ENCODE measurements at regions of chr15 and their contacts with region 1.

Region 1: GRCh38 chr15:36529296-36530011 is 50.0 kb upstream of the CDIN1 start:
- DNase-seq: no peak
- H3K4me3 ChIP-seq: no peak overlapping the region
- H3K27ac ChIP-seq: no peak overlapping the region
- H3K4me1 ChIP-seq: no peaks in the 10 kb centered on the region
- H3K27me3 ChIP-seq: no peaks in the 10 kb centered on the region
- CTCF ChIP-seq: no peak
- POLR2A ChIP-seq: no peak

Region 2: DNA sequence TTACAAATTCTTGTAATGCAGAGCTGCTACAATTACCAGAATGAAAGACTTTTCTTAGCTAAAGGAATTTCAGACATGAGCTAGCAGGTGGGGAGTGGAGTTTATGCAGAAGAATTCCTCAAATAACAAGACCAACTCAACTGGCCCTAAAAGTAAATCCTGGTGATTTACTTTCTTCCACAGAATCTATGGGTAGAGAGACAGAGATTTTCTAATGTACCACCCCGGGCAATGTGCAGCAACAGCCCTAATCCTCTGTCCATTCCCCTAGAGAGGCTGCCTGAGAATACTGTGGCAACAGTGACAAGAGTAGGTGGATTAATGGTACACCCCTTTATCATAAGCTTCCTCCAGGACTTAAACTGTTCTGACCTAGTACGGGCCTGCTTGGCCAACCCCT is 1615.1 kb before region 1 on chr15:
- intact Hi-C with region 1: loop called (anchors 10 kb)
- DNase-seq: no peak
- H3K4me3 ChIP-seq: no peak overlapping the region
- H3K27ac ChIP-seq: no peak overlapping the region
- H3K4me1 ChIP-seq: no peaks in the 10 kb centered on the region
- H3K27me3 ChIP-seq: no peaks in the 10 kb centered on the region
- CTCF ChIP-seq: no peak
- POLR2A ChIP-seq: no peak

Region 3: DNA sequence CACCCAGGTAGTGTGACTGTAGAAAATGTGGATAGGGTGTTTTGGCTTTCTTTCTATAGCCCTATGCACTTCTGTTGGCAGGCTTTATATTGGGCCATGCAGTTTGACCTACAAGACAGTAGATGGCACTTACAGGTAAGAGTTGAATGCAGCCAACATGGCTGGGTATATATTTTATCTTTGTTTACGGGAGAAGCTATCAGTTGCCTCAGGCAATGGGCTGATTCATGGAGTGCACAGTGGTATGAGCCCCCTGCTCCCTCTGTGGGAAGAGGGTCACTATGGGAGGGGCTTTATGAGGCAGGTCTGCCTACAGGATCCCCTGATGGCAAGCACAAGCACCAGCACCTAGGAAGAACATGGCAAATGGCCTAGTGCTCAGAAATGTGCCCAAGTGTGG is 251.2 kb before region 1 on chr15:
- intact Hi-C with region 1: no loop called
- DNase-seq: no peak
- H3K4me3 ChIP-seq: no peak overlapping the region
- H3K27ac ChIP-seq: no peak overlapping the region
- H3K4me1 ChIP-seq: no peaks in the 10 kb centered on the region
- H3K27me3 ChIP-seq: no peaks in the 10 kb centered on the region
- CTCF ChIP-seq: no peak
- POLR2A ChIP-seq: no peak

Region 4: DNA sequence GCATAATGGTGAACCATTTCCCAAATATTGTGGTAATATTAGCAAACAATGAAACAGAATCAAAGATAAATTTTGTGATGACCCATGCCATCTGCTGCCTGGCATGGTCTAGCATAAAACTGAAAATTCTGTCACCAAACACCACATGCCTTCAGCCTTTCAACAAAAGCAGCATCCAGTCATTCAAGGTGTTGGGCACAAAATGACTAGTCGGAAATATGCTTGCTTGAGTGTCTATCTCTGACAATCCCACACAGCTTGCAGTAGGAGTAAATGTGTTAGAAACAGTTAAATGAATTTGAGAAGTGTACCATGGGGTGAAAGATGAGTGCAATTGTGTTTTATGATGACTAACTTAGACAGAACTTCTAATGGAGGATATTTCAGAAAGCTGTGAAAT is 11.7 kb before region 1 on chr15:
- intact Hi-C with region 1: no loop called
- DNase-seq: no peak
- H3K4me3 ChIP-seq: no peak overlapping the region
- H3K27ac ChIP-seq: no peak overlapping the region
- H3K4me1 ChIP-seq: no peaks in the 10 kb centered on the region
- H3K27me3 ChIP-seq: no peaks in the 10 kb centered on the region
- CTCF ChIP-seq: no peak
- POLR2A ChIP-seq: no peak

Region 5: DNA sequence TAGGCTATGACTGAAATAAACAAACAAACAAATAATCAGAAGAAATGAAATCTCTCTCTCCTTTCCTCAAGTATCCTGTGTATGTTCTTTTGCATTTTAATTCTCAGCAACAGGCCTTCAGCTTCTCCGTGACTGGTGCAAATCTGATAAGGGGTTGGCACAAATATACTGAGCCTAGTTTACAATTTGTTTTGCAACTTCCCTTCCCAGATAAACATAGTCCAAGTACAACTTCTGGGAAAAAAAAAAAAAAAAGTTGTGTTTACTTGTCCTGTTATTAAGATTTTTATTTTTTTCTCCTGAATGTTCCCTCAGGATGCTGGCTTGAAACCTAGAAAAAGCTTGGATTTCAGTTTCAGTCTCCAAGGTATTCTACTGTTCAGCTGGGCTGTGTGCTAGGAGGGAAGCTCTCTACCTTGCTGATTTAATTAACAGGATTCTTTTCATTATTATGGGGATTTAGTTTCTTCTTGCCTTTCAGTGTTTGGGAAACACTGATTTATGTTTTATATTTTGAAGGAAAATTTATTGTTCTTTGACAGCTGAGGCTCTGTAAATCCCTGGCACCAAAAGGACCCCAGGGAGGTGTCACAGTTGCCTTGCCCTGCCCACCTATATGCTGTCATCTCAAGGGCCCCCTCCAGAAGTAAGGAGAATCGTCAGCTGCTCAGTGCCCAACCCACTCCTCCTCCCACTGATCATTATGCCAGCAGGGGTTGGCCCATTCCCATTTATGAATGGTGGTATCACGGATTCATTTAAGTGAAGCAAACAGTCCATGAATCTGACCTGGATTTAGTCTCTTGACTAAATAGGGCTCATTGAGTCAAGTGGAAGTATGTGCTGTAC is 385.7 kb after region 1 on chr15:
- intact Hi-C with region 1: no loop called
- DNase-seq: no peak
- H3K4me3 ChIP-seq: no peak overlapping the region
- H3K27ac ChIP-seq: peak overlapping the region; percentile 3 to 60
- H3K4me1 ChIP-seq: no peaks in the 10 kb centered on the region
- H3K27me3 ChIP-seq: no peaks in the 10 kb centered on the region
- CTCF ChIP-seq: no peak
- POLR2A ChIP-seq: no peak

Measured in breast epithelium (tissue), 4 donors.